GM12878 (cell line): ENCODE measurements at regions of chr7 and their contacts with region 1.

Region 1: GRCh38 chr7:7816084-7816483 is 97.7 kb upstream of the RPA3 start:
- DNase-seq: peak; percentile 85
- ATAC-seq: peak; percentile 53
- H3K4me3 ChIP-seq: peak overlapping the region; percentile 32
- H3K27ac ChIP-seq: peak overlapping the region; percentile 67
- H3K4me1 ChIP-seq: peaks cover 43% of the 10 kb centered on the region
- H3K27me3 ChIP-seq: no peaks in the 10 kb centered on the region
- CTCF ChIP-seq: no peak
- EP300 ChIP-seq: peak; percentile 73 to 92
- POLR2A ChIP-seq: 0 out of 2 replicates have a peak, but pooled peaks have one; percentile 29
- RAD21 ChIP-seq: no peak

Region 2: GRCh38 chr7:7707806-7708205 is 108.3 kb before region 1 on chr7:
- CTCF ChIA-PET with region 1: no interaction called
- POLR2A ChIA-PET with region 1: no interaction called
- RAD21 ChIA-PET with region 1: no interaction called
- SMC1A ChIA-PET with region 1: no interaction called
- in situ Hi-C with region 1: no loop called
- intact Hi-C with region 1: loop called (anchors 2 kb)
- DNase-seq: no peak
- ATAC-seq: no peak
- H3K4me3 ChIP-seq: no peak overlapping the region
- H3K27ac ChIP-seq: no peak overlapping the region
- H3K4me1 ChIP-seq: peaks cover 15% of the 10 kb centered on the region; the same call in 1 of the 2 replicates
- H3K27me3 ChIP-seq: no peaks in the 10 kb centered on the region
- CTCF ChIP-seq: no peak
- EP300 ChIP-seq: no peak
- POLR2A ChIP-seq: no peak
- RAD21 ChIP-seq: no peak

Region 3: GRCh38 chr7:7789551-7789988 is 26.5 kb before region 1 on chr7:
- CTCF ChIA-PET with region 1: interaction called, 3 read pairs
- POLR2A ChIA-PET with region 1: interaction called, 3 read pairs
- RAD21 ChIA-PET with region 1: interaction called, 7 read pairs
- SMC1A ChIA-PET with region 1: interaction called, 12 read pairs
- in situ Hi-C with region 1: no loop called
- intact Hi-C with region 1: no loop called
- DNase-seq: peak; percentile 73
- ATAC-seq: peak; percentile 99
- H3K4me3 ChIP-seq: no peak overlapping the region
- H3K27ac ChIP-seq: no peak overlapping the region; the same call in 1 of the 2 replicates
- H3K4me1 ChIP-seq: peaks cover 11% of the 10 kb centered on the region
- H3K27me3 ChIP-seq: no peaks in the 10 kb centered on the region
- CTCF ChIP-seq: no peak
- EP300 ChIP-seq: peak; percentile 28 to 84; a peak in 2 of 4 replicates
- POLR2A ChIP-seq: no peak
- RAD21 ChIP-seq: no peak

Region 4: DNA sequence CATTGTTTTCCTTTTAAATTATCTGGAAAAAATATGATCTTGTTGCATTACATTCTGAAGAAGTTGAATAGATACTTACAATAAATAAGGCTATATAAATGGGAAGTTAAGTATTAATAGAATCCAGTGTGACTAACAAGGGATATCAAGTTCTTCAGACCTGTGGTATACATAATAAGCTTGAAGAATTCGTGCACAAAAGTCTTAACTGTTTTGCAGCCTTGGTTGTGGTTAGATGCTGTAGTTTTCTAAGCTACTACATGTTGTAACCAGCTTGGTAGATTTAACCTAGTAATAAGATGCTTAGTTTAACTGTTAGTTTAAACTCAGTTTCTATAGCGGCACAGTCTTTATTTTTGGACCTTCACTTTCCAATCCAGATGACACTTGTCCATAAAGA is 46.3 kb after region 1 on chr7:
- CTCF ChIA-PET with region 1: no interaction called
- POLR2A ChIA-PET with region 1: interaction called, 4 read pairs
- RAD21 ChIA-PET with region 1: interaction called, 10 read pairs
- SMC1A ChIA-PET with region 1: interaction called, 13 read pairs
- in situ Hi-C with region 1: no loop called
- intact Hi-C with region 1: no loop called
- DNase-seq: no peak
- ATAC-seq: no peak
- H3K4me3 ChIP-seq: no peak overlapping the region
- H3K27ac ChIP-seq: no peak overlapping the region
- H3K4me1 ChIP-seq: peaks cover under 1% of the 10 kb centered on the region; the same call in 1 of the 2 replicates
- H3K27me3 ChIP-seq: no peaks in the 10 kb centered on the region
- CTCF ChIP-seq: no peak
- EP300 ChIP-seq: no peak
- POLR2A ChIP-seq: no peak
- RAD21 ChIP-seq: no peak

Region 5: GRCh38 chr7:7977774-7978173 is 161.7 kb after region 1 on chr7:
- CTCF ChIA-PET with region 1: interaction called, 3 read pairs
- POLR2A ChIA-PET with region 1: interaction called, 3 read pairs
- RAD21 ChIA-PET with region 1: interaction called, 14 read pairs
- SMC1A ChIA-PET with region 1: interaction called, 10 read pairs
- in situ Hi-C with region 1: no loop called
- intact Hi-C with region 1: no loop called
- DNase-seq: no peak
- ATAC-seq: peak; percentile 4
- H3K4me3 ChIP-seq: peak overlapping the region; percentile 47; the same call in 1 of the 2 replicates
- H3K27ac ChIP-seq: peak overlapping the region; percentile 30; the same call in 1 of the 2 replicates
- H3K4me1 ChIP-seq: peaks cover 4% of the 10 kb centered on the region; the same call in 1 of the 2 replicates
- H3K27me3 ChIP-seq: no peaks in the 10 kb centered on the region
- CTCF ChIP-seq: no peak
- EP300 ChIP-seq: no peak
- POLR2A ChIP-seq: no peak
- RAD21 ChIP-seq: no peak

Region 6: DNA sequence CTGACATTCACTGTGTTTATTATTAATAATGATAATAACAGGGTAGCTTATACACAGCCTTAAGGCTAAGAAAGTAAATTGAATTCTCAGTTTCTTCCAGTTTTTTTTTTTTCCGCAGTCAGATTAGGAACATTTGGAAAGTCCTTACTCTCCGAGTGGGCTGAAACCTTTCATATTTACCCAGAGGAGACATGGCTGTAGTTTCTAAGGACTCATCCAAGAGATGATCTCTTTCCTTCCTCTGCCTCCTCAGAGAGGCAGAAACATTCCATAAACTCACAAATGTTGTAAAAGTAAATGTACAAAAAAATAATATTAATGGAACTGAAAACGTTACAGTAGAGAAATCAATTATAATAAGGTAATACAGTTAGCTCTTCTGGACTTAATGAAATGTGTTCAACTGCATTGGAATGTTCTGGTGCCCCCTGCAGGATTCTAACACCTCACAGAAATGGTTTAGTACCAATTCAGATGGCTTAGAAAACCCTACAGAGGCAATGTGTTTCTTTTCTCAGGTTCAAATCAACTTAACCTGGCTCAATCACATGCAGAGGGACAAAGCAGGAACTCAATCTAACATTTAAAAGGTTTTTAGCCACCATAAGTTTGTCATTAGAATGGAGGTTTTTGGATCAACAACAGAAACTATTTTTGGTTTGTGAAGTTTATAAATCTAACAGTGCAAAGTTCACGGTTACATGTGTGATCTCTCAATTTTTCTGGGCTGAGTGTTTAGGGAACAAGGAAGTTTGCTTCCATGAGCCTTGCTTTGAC is 374.2 kb after region 1 on chr7:
- CTCF ChIA-PET with region 1: interaction called, 3 read pairs
- POLR2A ChIA-PET with region 1: no interaction called
- RAD21 ChIA-PET with region 1: interaction called, 11 read pairs
- SMC1A ChIA-PET with region 1: interaction called, 4 read pairs
- in situ Hi-C with region 1: no loop called
- intact Hi-C with region 1: no loop called
- DNase-seq: peak; percentile 77
- ATAC-seq: peak; percentile 97
- H3K4me3 ChIP-seq: no peak overlapping the region
- H3K27ac ChIP-seq: peak overlapping the region; percentile 44; the same call in 1 of the 2 replicates
- H3K4me1 ChIP-seq: no peaks in the 10 kb centered on the region
- H3K27me3 ChIP-seq: no peaks in the 10 kb centered on the region
- CTCF ChIP-seq: peak; percentile 66 to 82 (median 81); a peak in 5 of 6 replicates
- EP300 ChIP-seq: no peak
- POLR2A ChIP-seq: no peak
- RAD21 ChIP-seq: peak; percentile 97